ENCODE measurements at regions of chr5 and their contacts with region 1.

Region 1: DNA sequence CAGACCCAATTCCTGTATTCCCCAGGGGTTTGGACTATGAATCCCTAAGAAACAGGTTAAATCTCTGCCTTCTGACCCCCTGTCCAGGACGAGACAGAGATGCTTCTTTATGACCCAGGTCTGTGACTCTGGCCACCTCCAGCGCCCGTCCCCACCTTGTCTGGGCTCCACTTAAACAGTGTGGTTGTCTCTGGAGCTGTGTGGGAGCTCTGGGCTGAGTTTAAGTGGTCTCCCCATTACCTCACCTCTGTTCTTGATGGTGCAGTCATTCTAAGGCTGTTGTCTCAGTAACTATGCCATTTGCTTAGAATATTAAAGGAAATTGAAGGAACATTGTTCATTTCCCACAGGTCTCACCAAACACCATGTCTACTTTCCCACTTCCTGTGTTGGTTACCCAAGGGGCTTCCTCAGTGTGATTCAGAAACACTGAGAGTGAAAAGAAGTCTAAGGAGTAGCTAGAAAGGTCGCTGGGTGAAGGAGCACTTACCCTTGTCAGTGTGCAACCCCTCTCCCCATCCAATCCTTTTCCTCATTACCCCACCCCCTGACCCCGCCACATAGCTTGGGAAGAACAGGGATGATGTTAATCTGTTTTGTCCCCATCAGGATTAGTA is 127.8 kb upstream of the CKMT2 start:
- DNase-seq: peak in 1 of 9 experiments; percentile 13
- ATAC-seq: no peak
- H3K4me3 ChIP-seq: no peak overlapping the region
- H3K4me3 Mint-ChIP-seq: no peak overlapping the region
- H3K27ac ChIP-seq: no peak overlapping the region
- H3K27ac Mint-ChIP-seq: peak overlapping the region; percentile 82
- H3K4me1 ChIP-seq: peaks cover 15% of the 10 kb centered on the region
- H3K4me1 Mint-ChIP-seq: peaks cover 34% of the 10 kb centered on the region
- H3K27me3 ChIP-seq: no peaks in the 10 kb centered on the region
- H3K27me3 Mint-ChIP-seq: no peaks in the 10 kb centered on the region
- CTCF ChIP-seq: no peak

Region 2: DNA sequence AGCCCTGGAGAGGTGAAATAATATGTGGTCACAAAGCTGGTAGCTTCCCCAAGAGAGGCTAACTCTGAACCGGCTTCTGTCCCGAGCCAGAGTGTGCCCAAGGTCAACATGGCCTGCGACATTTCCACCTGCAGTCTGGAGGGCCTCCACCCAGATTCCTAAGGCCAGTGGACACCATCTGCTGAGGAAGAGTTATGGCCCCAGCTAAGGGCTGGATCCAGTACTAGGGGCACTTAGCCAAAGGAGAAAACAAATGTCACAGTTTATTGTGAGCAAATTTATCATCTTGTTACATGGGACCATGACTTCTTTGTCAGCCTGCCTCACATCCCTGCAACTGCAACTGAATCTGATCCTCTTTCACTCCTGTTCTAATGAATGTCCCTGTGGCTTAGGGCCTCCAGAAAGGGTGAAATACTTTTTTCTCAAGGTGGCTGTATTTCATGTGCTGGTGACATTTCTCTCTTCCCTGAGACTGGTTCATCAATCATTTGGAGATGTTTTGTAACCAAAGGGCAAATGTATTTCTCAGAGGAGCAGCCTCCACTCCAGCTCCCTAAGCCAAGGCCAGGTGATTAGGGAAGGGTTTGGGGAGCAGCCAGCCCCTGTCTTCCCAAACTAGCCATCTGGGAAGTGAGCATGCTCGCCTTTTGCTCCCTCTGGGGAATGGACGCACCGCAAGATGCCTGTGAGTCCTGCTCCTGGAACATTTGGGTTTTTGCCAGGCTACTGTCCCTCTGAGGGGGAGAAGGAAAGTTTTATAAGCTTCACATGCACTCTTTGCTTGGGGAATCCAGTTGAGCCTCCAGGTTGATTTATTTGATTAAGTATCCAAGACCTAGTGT is 1267.4 kb before region 1 on chr5:
- CTCF ChIA-PET with region 1: no interaction called
- POLR2A ChIA-PET with region 1: no interaction called
- intact Hi-C with region 1: no loop called
- DNase-seq: peak in 1 of 9 experiments; percentile 34
- ATAC-seq: no peak
- H3K4me3 ChIP-seq: no peak overlapping the region
- H3K4me3 Mint-ChIP-seq: no peak overlapping the region
- H3K27ac ChIP-seq: no peak overlapping the region
- H3K27ac Mint-ChIP-seq: no peak overlapping the region
- H3K4me1 ChIP-seq: no peaks in the 10 kb centered on the region
- H3K4me1 Mint-ChIP-seq: no peaks in the 10 kb centered on the region
- H3K27me3 ChIP-seq: no peaks in the 10 kb centered on the region
- H3K27me3 Mint-ChIP-seq: peaks cover 8% of the 10 kb centered on the region
- CTCF ChIP-seq: no peak

Region 3: DNA sequence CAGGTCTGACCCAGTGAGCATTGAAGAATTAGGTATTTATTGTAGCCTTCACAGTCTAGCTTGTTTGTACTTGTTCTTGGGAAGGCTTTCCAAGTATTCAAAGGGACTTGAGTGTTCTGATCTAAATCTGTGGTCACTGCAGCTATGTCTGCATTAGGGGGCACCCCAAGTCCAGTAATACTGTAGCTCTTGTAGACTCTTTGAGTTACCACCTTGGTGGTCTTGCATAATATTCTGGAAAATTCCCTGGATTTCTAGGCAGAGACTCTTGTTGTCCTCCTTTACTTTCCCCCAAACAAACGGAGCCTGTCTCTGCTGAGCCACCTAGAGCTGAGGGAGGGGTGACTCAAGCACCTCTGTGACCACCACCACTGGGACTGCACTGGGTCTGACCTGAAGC is 301.0 kb before region 1 on chr5:
- CTCF ChIA-PET with region 1: no interaction called
- POLR2A ChIA-PET with region 1: no interaction called
- intact Hi-C with region 1: loop called in 1 of 2 experiments (anchors 5 kb)
- DNase-seq: peak in 2 of 9 experiments; percentile 10 to 26
- ATAC-seq: no peak
- H3K4me3 ChIP-seq: no peak overlapping the region
- H3K4me3 Mint-ChIP-seq: no peak overlapping the region
- H3K27ac ChIP-seq: no peak overlapping the region
- H3K27ac Mint-ChIP-seq: no peak overlapping the region
- H3K4me1 ChIP-seq: no peaks in the 10 kb centered on the region
- H3K4me1 Mint-ChIP-seq: no peaks in the 10 kb centered on the region
- H3K27me3 ChIP-seq: no peaks in the 10 kb centered on the region
- H3K27me3 Mint-ChIP-seq: no peaks in the 10 kb centered on the region
- CTCF ChIP-seq: no peak

Region 4: GRCh38 chr5:80921026-80921425 is 184.3 kb before region 1 on chr5:
- CTCF ChIA-PET with region 1: no interaction called
- POLR2A ChIA-PET with region 1: no interaction called
- intact Hi-C with region 1: no loop called
- DNase-seq: no peak
- ATAC-seq: no peak
- H3K4me3 ChIP-seq: no peak overlapping the region
- H3K4me3 Mint-ChIP-seq: no peak overlapping the region
- H3K27ac ChIP-seq: no peak overlapping the region
- H3K27ac Mint-ChIP-seq: no peak overlapping the region
- H3K4me1 ChIP-seq: no peaks in the 10 kb centered on the region
- H3K4me1 Mint-ChIP-seq: peaks cover 8% of the 10 kb centered on the region
- H3K27me3 ChIP-seq: no peaks in the 10 kb centered on the region
- H3K27me3 Mint-ChIP-seq: no peaks in the 10 kb centered on the region
- CTCF ChIP-seq: no peak

Region 5: DNA sequence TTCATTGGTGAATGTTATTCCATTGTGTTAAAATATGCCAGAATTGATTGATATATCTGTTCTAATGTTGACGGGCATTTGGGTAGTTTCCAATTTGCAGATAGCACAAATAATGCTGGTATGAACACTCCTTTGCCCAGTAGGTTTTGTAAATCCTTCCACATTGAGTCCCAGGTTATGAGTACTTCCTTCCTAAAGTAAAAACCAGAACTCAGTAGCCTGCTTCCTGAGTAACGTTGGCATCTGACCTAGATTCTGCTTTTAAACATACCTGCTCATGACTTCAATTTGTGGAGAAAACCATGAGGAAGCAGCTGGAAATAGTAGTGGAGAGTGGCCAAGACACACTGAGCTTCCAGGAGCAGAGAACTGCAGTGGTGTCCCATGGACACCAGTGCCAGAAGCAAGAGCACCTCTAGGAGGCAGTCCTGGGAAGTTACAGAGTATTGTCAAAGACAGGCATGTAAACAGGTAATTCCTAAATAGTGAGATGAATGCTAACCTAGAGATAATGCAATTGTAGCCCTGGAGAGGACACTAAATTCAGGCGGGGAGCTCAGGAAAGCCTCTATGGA is 169.5 kb before region 1 on chr5:
- CTCF ChIA-PET with region 1: interaction called, 25 read pairs
- POLR2A ChIA-PET with region 1: interaction called, 3 read pairs
- intact Hi-C with region 1: loop called (anchors 1 to 2 kb)
- DNase-seq: peak in 2 of 9 experiments; percentile 16 to 31
- ATAC-seq: peak; percentile 29
- H3K4me3 ChIP-seq: no peak overlapping the region
- H3K4me3 Mint-ChIP-seq: no peak overlapping the region
- H3K27ac ChIP-seq: no peak overlapping the region
- H3K27ac Mint-ChIP-seq: no peak overlapping the region
- H3K4me1 ChIP-seq: no peaks in the 10 kb centered on the region
- H3K4me1 Mint-ChIP-seq: peaks cover 7% of the 10 kb centered on the region
- H3K27me3 ChIP-seq: no peaks in the 10 kb centered on the region
- H3K27me3 Mint-ChIP-seq: no peaks in the 10 kb centered on the region
- CTCF ChIP-seq: no peak

Region 6: DNA sequence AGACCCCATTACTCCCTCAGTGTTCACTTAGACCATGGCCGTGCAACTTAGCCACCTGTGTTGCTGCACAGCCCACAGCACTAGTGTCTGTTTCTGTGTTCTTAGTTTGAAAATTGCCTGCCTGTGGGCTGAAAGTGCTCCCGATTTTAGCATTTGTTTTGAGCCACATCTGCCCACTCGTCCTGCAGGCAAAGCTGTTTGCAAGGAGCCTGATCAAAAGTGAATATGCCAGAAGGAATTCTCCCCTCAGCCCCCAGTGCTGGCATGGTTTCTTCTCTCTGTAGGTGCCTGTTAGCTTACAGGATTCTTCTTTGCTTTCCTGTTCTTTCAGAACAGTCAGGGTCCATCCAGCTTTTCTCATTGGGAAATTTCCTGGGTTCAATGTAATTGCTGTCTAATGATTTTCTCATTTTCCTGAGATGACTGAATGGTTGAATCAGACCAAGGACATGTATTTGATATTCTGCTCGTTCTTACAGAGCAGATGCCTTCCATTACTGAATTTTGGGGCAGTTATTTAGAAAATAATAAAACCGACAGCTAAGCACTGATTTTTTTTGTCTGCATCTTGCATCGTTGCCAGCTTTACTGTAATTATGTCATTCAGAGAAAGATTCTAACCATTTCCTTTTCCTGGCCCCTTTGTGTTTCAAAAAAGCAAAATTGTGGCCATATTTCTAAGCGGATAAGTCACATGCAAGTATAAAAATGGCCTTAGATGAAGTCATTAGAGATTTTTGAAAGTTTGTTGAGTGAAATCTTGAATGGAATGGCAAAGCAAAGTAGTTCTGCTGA is 16.7 kb after region 1 on chr5:
- CTCF ChIA-PET with region 1: interaction called, 11 read pairs
- POLR2A ChIA-PET with region 1: interaction called, 5 read pairs
- intact Hi-C with region 1: no loop called
- DNase-seq: no peak
- ATAC-seq: no peak
- H3K4me3 ChIP-seq: no peak overlapping the region
- H3K4me3 Mint-ChIP-seq: no peak overlapping the region
- H3K27ac ChIP-seq: no peak overlapping the region
- H3K27ac Mint-ChIP-seq: peak overlapping the region; percentile 4
- H3K4me1 ChIP-seq: peaks cover 11% of the 10 kb centered on the region
- H3K4me1 Mint-ChIP-seq: peaks cover 30% of the 10 kb centered on the region
- H3K27me3 ChIP-seq: no peaks in the 10 kb centered on the region
- H3K27me3 Mint-ChIP-seq: no peaks in the 10 kb centered on the region
- CTCF ChIP-seq: no peak

Measured in CD8-positive, alpha-beta T cell (primary cell).